ENCODE measurements at regions of chr17 and their contacts with region 1.

Region 1: DNA sequence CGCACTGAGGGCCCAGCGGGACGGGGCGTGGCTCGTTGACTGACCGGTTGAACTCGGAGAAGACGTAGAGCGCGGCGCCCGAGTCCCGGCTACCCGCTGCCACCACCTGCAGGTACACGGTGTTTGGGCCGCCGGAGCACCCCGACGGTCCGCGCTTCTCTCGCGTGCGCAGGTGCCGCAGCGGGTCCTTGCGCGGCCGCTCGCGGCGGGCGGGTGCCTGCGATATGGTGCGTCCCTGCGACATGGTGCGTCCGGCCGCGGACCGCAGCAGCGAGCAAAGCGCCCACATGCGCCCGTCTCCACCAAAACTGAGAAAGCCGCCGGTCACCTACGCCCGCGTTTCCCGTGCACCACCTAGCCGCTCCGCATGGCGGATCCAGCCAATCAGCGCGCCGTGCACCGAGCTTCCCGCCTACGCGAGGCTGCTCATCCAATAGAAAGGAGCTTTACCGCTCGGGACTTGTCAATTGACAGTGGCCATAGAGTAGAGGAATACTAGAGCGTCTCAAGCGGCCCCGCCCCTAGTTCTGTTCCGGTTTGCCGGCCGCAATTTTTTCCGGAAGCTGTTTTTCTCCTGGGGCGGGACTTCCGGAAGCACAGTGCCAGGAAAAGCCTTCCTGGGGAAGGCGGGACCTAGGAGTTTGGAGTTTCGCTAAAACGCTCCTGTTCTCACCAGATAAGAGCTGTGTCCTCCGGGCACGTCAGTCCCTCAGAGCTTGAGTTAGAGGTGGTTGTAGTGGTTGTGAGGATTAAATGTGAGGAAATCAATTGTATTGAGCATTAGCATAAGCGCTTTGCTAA is at the start of gene ELAC2:
- DNase-seq: peak; percentile 97
- ATAC-seq: peak; percentile 100
- H3K4me3 Mint-ChIP-seq: peak within 1 kb of the TSS; percentile 94
- H3K27ac Mint-ChIP-seq: peak within 1 kb of the TSS; percentile 95
- H3K4me1 Mint-ChIP-seq: peaks cover 30% of the 10 kb centered on the region
- H3K27me3 Mint-ChIP-seq: no peaks in the 10 kb centered on the region
- total RNA-seq, gene ELAC2: 67.1 to 89.0 TPM

Region 2: GRCh38 chr17:13002766-13003451 is 14.9 kb before region 1 on chr17:
- CTCF ChIA-PET with region 1: interaction called, 33 read pairs
- DNase-seq: peak; percentile 47
- ATAC-seq: no peak
- H3K4me3 Mint-ChIP-seq: no peak overlapping the region
- H3K27ac Mint-ChIP-seq: no peak overlapping the region
- H3K4me1 Mint-ChIP-seq: no peaks in the 10 kb centered on the region
- H3K27me3 Mint-ChIP-seq: no peaks in the 10 kb centered on the region

Region 3: DNA sequence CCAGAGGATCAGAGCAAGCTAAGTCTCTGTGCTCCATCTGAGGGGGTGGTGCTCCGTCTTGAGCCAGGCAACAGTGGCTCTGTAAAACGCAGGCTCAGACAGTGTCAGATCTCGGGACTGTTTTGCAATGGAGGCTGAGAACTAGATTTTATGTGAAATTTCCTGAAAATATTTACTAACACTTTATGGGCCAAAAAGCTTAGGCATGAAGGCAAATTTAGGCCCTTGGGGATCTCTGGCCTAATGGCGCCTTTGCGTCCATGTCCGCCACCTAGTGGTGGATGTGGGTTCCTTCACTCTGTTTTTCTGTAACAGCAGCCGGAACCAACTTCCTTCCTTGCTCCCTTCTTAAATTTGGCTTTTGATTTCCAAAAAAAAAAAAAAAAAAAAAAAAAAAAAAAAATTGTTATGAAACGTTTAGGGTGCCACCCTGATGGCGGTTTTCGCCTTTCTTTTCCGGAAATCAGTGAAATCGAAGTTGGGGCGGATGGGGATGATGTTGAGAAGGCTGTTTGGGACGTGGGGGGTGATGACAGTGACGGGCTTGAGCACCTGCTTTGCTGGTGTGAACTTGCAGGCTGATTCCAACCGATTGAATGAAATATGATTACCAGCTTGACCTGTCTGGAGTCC is 14.0 kb after region 1 on chr17:
- CTCF ChIA-PET with region 1: interaction called, 84 read pairs
- DNase-seq: peak; percentile 59
- ATAC-seq: peak; percentile 47
- H3K4me3 Mint-ChIP-seq: no peak overlapping the region
- H3K27ac Mint-ChIP-seq: no peak overlapping the region
- H3K4me1 Mint-ChIP-seq: no peaks in the 10 kb centered on the region
- H3K27me3 Mint-ChIP-seq: peaks cover 8% of the 10 kb centered on the region

Measured in activated CD8-positive, alpha-beta memory T cell treated with anti-CD3 and anti-CD28 coated beads, Interleukin-2, amount 10 ng/mL, durations not matched to agents 7 days and 5 days (primary cell).